ENCODE measurements at regions of chr6 and their contacts with region 1.

Region 1: GRCh38 chr6:25017932-25018567 is 82.3 kb upstream of the RIPOR2 start:
- DNase-seq: peak; percentile 87
- ATAC-seq: peak; percentile 79
- H3K4me3 ChIP-seq: no peak overlapping the region
- H3K4me3 Mint-ChIP-seq: peak overlapping the region; percentile 48
- H3K27ac ChIP-seq: peak overlapping the region; percentile 46 to 86
- H3K27ac Mint-ChIP-seq: peak overlapping the region; percentile 72
- H3K4me1 ChIP-seq: peaks cover 42 to 49% of the 10 kb centered on the region in 2 donors
- H3K4me1 Mint-ChIP-seq: peaks cover 44% of the 10 kb centered on the region
- H3K27me3 ChIP-seq: no peaks in the 10 kb centered on the region
- H3K27me3 Mint-ChIP-seq: no peaks in the 10 kb centered on the region
- CTCF ChIP-seq: peak; percentile 87

Region 2: DNA sequence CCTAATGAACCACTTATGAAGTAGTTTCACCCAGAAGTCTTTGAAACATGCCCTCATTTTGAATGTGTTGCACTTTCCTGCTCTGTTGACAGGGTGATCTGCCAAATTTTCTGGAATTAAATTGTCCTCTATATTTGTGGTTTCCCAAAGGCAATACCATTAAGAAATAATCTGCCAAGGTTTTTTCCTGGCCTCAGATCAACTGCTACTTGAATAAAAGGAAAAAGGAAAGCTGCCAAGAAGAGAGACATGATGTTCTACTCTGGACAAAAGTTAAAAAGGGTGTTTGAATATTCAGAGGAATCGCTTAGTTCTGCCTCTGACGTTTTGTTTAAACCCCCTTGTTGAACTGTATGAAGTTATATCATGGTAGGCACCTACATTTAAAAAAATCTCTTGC is 181.9 kb before region 1 on chr6:
- CTCF ChIA-PET with region 1: interaction called, 13 read pairs
- POLR2A ChIA-PET with region 1: no interaction called
- intact Hi-C with region 1: no loop called
- DNase-seq: no peak
- ATAC-seq: no peak
- H3K4me3 ChIP-seq: no peak overlapping the region
- H3K4me3 Mint-ChIP-seq: no peak overlapping the region
- H3K27ac ChIP-seq: peak overlapping the region in 1 of 2 donors; percentile 47
- H3K27ac Mint-ChIP-seq: peak overlapping the region; percentile 78
- H3K4me1 ChIP-seq: peaks cover 0 to 5% of the 10 kb centered on the region in 2 donors
- H3K4me1 Mint-ChIP-seq: peaks cover 14% of the 10 kb centered on the region
- H3K27me3 ChIP-seq: no peaks in the 10 kb centered on the region
- H3K27me3 Mint-ChIP-seq: no peaks in the 10 kb centered on the region
- CTCF ChIP-seq: no peak

Region 3: DNA sequence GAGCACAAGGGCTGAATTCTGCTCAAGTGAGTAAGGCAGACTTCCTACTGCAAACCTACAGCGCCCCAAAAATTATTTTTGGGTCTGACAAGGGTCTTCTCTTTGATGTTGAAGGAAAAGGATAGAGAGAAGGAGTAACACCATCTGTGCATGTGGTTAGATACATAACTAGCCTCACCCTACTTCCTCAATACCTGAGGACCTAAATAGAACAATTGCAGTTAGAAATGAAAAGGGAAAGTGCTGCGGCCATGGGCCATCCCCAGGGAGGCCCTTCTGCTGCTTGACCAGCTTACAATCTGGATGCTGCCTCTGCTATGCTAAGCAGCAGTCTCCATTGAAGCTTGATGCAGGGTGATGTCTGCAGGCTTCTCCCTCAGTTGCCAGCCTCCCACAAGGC is 156.1 kb before region 1 on chr6:
- CTCF ChIA-PET with region 1: interaction called, 216 read pairs
- POLR2A ChIA-PET with region 1: interaction called, 19 read pairs
- intact Hi-C with region 1: no loop called
- DNase-seq: peak; percentile 67
- ATAC-seq: peak; percentile 46
- H3K4me3 ChIP-seq: peak overlapping the region in 2 of 5 experiments; percentile 4 to 8
- H3K4me3 Mint-ChIP-seq: peak overlapping the region; percentile 53
- H3K27ac ChIP-seq: peak overlapping the region; percentile 81 to 88
- H3K27ac Mint-ChIP-seq: peak overlapping the region; percentile 87
- H3K4me1 ChIP-seq: peaks cover 84 to 88% of the 10 kb centered on the region in 2 donors
- H3K4me1 Mint-ChIP-seq: peaks cover 90% of the 10 kb centered on the region
- H3K27me3 ChIP-seq: no peaks in the 10 kb centered on the region
- H3K27me3 Mint-ChIP-seq: no peaks in the 10 kb centered on the region
- CTCF ChIP-seq: no peak

Region 4: GRCh38 chr6:24891004-24891403 is 127.0 kb before region 1 on chr6:
- CTCF ChIA-PET with region 1: interaction called, 12 read pairs
- POLR2A ChIA-PET with region 1: no interaction called
- intact Hi-C with region 1: no loop called
- DNase-seq: no peak
- ATAC-seq: peak; percentile 28
- H3K4me3 ChIP-seq: no peak overlapping the region
- H3K4me3 Mint-ChIP-seq: peak overlapping the region; percentile 58
- H3K27ac ChIP-seq: peak overlapping the region in 1 of 2 donors; percentile 53
- H3K27ac Mint-ChIP-seq: peak overlapping the region; percentile 54
- H3K4me1 ChIP-seq: peaks cover 82 to 83% of the 10 kb centered on the region in 2 donors
- H3K4me1 Mint-ChIP-seq: peaks cover 88% of the 10 kb centered on the region
- H3K27me3 ChIP-seq: no peaks in the 10 kb centered on the region
- H3K27me3 Mint-ChIP-seq: no peaks in the 10 kb centered on the region
- CTCF ChIP-seq: no peak

Region 5: DNA sequence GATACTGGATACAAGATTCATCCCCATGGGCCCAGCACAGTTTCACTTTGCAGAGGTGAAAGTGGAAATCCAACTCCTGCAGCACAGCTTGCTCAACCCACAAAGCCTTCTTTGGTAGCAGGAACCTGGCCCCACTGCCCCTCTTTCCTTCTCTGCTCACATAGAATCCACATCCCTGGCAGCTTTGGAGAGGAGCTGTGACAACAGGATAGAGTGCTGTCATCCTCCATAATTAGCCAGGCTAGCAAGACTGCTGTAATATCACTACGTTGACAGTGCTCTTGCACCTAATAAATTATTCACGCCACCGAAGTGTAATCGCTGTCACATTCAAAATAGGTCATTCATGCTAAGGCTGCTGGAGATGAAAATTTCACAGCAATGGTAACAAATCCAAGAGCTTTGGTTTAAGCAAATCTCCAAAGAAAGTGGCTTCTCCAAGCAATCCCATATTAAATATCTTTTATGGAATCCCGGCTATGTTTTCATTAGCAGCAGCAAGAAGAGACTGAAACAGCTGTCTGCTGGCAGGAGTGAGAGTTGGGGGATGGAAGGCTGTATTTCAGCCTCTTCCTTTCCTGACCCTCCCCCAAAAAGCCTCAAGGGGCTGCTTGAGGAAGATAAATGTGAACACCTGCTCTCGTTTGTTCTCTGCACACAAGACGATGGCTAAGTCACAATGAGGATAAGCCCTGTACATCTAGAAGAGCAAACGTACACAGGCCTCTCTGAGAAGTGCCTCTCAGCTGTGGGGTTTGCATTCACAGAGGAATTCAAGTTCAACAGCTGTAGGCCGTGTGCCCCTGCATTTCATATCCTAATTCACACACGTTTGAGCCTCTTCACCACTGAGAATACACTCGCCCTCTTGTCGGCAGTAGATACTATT is 98.8 kb before region 1 on chr6:
- CTCF ChIA-PET with region 1: interaction called, 23 read pairs
- POLR2A ChIA-PET with region 1: no interaction called
- intact Hi-C with region 1: no loop called
- DNase-seq: peak; percentile 39
- ATAC-seq: peak; percentile 70
- H3K4me3 ChIP-seq: peak overlapping the region in 4 of 5 experiments; percentile 2 to 39 (median 16)
- H3K4me3 Mint-ChIP-seq: peak overlapping the region; percentile 84
- H3K27ac ChIP-seq: peak overlapping the region; percentile 36 to 68
- H3K27ac Mint-ChIP-seq: peak overlapping the region; percentile 92
- H3K4me1 ChIP-seq: peaks cover 95 to 99% of the 10 kb centered on the region in 2 donors
- H3K4me1 Mint-ChIP-seq: peaks cover 91% of the 10 kb centered on the region
- H3K27me3 ChIP-seq: no peaks in the 10 kb centered on the region
- H3K27me3 Mint-ChIP-seq: no peaks in the 10 kb centered on the region
- CTCF ChIP-seq: no peak

Region 6: DNA sequence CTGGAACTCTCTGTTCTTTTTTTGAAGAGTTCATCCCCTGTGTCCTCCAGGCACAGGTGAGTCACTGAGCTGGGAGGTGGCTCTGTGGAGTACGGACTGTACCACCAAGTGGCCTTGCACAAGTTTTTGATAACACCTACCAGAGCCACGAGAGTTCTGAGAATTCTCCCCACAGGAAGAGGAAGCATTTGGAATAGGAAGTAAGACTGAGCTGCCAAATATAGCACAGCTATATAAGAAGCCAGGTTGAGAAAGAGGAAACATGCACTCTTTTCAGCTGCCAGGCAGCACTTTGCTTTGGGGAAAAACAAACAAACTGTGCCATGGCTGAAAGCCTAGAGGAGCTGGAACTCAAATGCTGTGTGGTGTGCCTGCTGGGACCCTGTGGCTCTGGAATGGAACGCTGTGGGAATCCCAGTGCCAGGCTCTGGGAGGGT is 11.5 kb before region 1 on chr6:
- CTCF ChIA-PET with region 1: interaction called, 49 read pairs
- POLR2A ChIA-PET with region 1: no interaction called
- intact Hi-C with region 1: loop called (anchors 1 kb)
- DNase-seq: peak; percentile 87
- ATAC-seq: peak; percentile 76
- H3K4me3 ChIP-seq: peak overlapping the region in 3 of 5 experiments; percentile 18 to 44 (median 32)
- H3K4me3 Mint-ChIP-seq: peak overlapping the region; percentile 63
- H3K27ac ChIP-seq: peak overlapping the region; percentile 95 to 98
- H3K27ac Mint-ChIP-seq: peak overlapping the region; percentile 92
- H3K4me1 ChIP-seq: peaks cover 47% of the 10 kb centered on the region in 2 donors
- H3K4me1 Mint-ChIP-seq: peaks cover 67% of the 10 kb centered on the region
- H3K27me3 ChIP-seq: no peaks in the 10 kb centered on the region
- H3K27me3 Mint-ChIP-seq: no peaks in the 10 kb centered on the region
- CTCF ChIP-seq: no peak

Region 7: GRCh38 chr6:25070547-25071366 is 52.7 kb after region 1 on chr6:
- CTCF ChIA-PET with region 1: interaction called, 52 read pairs
- POLR2A ChIA-PET with region 1: interaction called, 3 read pairs
- intact Hi-C with region 1: loop called (anchors 2 kb)
- DNase-seq: peak; percentile 93
- ATAC-seq: peak; percentile 97
- H3K4me3 ChIP-seq: peak overlapping the region in 4 of 5 experiments; percentile 31 to 72 (median 48)
- H3K4me3 Mint-ChIP-seq: peak overlapping the region; percentile 86
- H3K27ac ChIP-seq: peak overlapping the region; percentile 74 to 80
- H3K27ac Mint-ChIP-seq: peak overlapping the region; percentile 97
- H3K4me1 ChIP-seq: peaks cover 0 to 4% of the 10 kb centered on the region in 2 donors
- H3K4me1 Mint-ChIP-seq: peaks cover 9% of the 10 kb centered on the region
- H3K27me3 ChIP-seq: no peaks in the 10 kb centered on the region
- H3K27me3 Mint-ChIP-seq: no peaks in the 10 kb centered on the region
- CTCF ChIP-seq: peak; percentile 95

Measured in B cell (primary cell).